HEK293 (cell line): ENCODE measurements at regions of chr7 and their contacts with region 1.

Region 1: GRCh38 chr7:134632937-134633540 is 13.6 kb upstream of the BPGM start:
- H3K4me3 ChIP-seq: no peak overlapping the region
- H3K27ac ChIP-seq: no peak overlapping the region
- H3K4me1 ChIP-seq: no peaks in the 10 kb centered on the region
- CTCF ChIP-seq: no peak

Region 2: DNA sequence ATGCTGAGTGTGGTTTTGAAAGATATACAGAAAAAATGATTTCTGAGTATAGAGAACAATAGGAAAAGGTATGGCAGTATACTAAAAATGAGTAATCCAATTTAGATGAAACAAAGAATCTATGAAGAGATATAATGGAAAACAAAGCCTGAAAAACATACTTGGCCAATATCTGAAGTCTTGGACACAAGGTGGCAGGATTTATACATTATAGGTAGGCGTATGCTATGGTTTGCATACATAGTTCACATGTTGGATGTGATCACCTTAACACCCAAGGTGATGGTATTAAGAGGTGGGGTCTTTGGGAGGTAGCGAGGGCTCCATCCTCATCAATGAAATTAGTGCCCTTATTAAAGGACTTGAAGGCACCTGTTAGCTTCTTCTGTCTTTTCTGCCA is 20.8 kb before region 1 on chr7:
- CTCF ChIA-PET with region 1: interaction called, 10 read pairs
- POLR2A ChIA-PET with region 1: no interaction called
- H3K4me3 ChIP-seq: no peak overlapping the region
- H3K27ac ChIP-seq: no peak overlapping the region
- H3K4me1 ChIP-seq: no peaks in the 10 kb centered on the region
- CTCF ChIP-seq: no peak

Region 3: DNA sequence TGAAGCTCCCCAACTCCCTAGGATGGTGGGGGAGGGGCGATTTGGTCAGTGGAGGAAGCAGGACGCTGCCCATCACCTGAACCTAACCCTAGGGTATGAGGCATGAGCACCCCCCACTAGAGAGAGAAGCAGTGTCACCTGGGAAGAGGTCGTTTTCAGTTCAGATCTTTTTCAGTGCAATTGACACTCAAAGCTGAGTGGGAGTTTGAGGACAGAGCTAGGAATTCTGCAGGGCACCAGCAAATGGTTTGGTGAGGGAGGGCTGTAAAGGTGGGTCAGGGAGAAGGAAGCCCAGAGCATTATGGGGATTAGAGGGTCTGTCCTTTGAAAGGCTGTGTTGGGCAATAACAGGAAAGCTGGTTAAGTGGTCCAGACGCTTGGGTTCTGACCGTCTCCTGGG is 24.5 kb after region 1 on chr7:
- CTCF ChIA-PET with region 1: interaction called, 13 read pairs
- POLR2A ChIA-PET with region 1: no interaction called
- H3K4me3 ChIP-seq: no peak overlapping the region
- H3K27ac ChIP-seq: no peak overlapping the region
- H3K4me1 ChIP-seq: no peaks in the 10 kb centered on the region
- CTCF ChIP-seq: no peak

Region 4: GRCh38 chr7:134701272-134701671 is 68.2 kb after region 1 on chr7:
- CTCF ChIA-PET with region 1: interaction called, 50 read pairs
- POLR2A ChIA-PET with region 1: no interaction called
- H3K4me3 ChIP-seq: no peak overlapping the region
- H3K27ac ChIP-seq: no peak overlapping the region
- H3K4me1 ChIP-seq: no peaks in the 10 kb centered on the region
- CTCF ChIP-seq: 0 out of 2 replicates have a peak, but pooled peaks have one; percentile 14

Region 5: GRCh38 chr7:134799377-134799776 is 166.3 kb after region 1 on chr7:
- CTCF ChIA-PET with region 1: no interaction called
- POLR2A ChIA-PET with region 1: no interaction called
- H3K4me3 ChIP-seq: no peak overlapping the region
- H3K27ac ChIP-seq: no peak overlapping the region
- H3K4me1 ChIP-seq: no peaks in the 10 kb centered on the region
- CTCF ChIP-seq: no peak

Region 6: DNA sequence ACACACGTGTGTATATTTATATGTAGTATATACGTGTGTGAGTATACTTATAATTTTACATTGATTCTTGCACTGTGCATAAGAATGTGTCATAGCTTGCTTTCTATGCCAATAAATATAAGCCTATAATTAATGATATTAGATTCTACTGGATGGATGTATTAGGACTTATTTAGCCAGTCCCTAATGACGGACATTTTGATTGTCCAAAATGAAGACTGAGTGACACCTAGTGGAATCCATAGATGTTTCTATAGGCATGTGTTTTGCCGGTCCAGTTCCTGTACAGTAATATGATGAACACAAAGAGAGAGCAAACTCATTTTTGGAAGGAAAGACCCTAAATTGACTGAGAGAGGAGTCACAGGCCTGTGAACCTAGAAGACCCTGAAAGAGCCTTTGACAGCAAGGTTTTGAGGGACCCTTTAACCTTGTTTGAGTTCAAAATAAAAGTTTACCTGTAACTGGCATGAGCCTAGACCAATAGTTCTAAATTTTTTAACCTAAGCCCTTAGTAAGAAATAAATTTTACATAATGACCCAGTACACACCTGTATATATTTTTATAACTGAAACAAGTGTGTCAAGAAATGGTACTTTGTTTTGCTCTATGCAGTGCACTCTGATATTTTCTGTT is 310.8 kb after region 1 on chr7:
- CTCF ChIA-PET with region 1: interaction called, 13 read pairs
- POLR2A ChIA-PET with region 1: no interaction called
- H3K4me3 ChIP-seq: no peak overlapping the region
- H3K27ac ChIP-seq: no peak overlapping the region
- H3K4me1 ChIP-seq: no peaks in the 10 kb centered on the region
- CTCF ChIP-seq: no peak